Naive thymus-derived CD4-positive, alpha-beta T cell (primary cell): ENCODE measurements at regions of chr6 and their contacts with region 1.

Region 1: DNA sequence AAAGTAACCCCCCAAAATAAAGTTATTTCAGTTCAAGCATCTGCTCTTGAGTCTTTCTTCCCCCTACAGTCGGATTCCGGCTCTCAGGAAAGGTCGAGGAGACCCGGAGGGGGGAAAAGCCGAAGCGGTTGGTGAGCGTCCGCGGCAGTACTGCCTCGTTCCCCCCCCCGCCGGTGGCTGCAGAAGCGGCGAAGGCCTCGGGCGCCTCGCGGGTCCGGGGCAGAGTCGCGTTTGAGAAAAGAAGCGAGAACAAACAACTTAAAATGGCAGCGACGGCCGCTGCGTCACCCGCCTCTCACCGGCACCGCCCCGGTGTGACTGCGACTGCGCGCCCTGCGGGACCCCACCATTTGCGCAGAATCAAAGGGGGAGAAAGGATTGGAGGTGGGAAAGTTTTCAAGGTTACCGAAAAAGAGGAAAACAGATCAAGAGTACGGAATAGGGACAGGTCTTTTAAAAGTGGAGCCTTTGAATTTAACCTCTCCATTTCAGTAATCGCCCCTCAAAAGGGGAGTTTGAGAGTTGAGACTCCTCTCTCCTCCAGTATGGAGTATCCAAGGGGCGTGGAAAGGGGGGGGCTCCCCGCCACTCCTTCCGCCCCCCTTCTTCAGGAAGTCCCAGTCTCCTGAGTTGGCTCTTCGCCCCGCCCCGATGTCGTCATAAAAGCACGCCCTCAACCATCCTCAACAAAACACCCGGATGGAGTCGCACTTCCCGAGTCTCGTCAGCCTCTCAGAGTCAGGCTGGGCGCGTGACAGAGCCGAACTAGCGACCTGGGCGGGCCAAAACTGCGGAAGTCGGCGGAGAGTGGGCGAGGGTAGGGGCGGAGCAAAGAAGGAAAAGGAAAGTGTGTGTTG is 1.9 kb upstream of the C6orf62 start:
- DNase-seq: peak; percentile 97 to 100 (median 100)
- ATAC-seq: peak; percentile 90
- H3K4me3 ChIP-seq: peak overlapping the region; percentile 89
- H3K4me3 Mint-ChIP-seq: peak overlapping the region; percentile 93 to 97 (median 96)
- H3K27ac ChIP-seq: peak overlapping the region; percentile 99
- H3K27ac Mint-ChIP-seq: peak overlapping the region; percentile 95 to 100 (median 99)
- H3K4me1 ChIP-seq: peaks cover 35 to 36% of the 10 kb centered on the region in 2 donors
- H3K4me1 Mint-ChIP-seq: peaks cover 27 to 52% (median 47%) of the 10 kb centered on the region in 7 donors
- H3K27me3 ChIP-seq: no peaks in the 10 kb centered on the region
- H3K27me3 Mint-ChIP-seq: peaks cover 0 to 2% (median 0%) of the 10 kb centered on the region in 5 donors

Region 2: DNA sequence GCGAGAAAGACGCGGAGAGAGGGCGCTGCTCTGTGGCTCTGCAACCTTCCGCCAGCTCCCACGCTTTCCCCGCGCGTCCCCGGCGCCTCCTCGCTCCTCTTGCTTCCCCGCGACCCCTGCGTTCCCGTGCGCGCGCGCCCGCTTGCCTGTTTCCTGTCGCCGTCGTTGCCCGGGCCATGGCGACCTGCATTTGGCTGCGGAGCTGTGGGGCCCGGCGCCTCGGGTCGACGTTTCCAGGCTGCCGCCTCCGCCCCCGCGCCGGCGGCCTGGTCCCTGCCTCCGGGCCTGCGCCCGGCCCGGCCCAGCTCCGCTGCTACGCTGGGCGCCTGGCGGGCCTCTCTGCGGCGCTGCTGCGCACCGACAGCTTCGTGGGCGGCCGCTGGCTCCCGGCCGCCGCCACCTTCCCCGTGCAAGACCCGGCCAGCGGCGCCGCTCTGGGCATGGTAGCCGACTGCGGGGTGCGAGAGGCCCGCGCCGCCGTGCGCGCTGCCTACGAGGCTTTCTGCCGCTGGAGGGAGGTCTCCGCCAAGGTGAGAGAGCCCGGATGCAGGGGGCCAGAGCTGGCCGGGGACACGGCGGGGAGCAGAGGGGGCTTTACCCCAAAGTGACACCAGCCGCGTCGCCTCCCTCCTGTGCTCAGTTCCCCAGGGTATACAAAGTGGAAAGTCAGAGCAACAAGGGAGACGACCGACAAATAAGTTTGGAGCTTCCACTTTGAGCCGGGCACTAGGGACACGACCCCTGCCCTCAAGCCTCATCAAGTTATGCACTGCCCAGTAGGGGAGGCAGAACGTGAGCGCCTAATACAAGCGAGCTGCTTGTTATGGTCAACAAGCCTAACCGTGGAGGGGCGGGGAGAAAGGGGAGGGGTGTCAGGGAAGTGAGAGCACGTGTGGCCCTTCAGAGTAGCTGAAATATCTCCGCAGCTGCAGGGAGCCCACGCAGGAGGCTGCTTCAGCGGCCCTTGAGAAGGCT is 225.7 kb before region 1 on chr6 and contains the start of gene ALDH5A1:
- CTCF ChIA-PET with region 1: no interaction called
- POLR2A ChIA-PET with region 1: interaction called, 6 read pairs
- intact Hi-C with region 1: loop called in 1 of 2 experiments (anchors 1 kb)
- DNase-seq: peak; percentile 63 to 86 (median 84)
- ATAC-seq: peak; percentile 89
- H3K4me3 ChIP-seq: peak within 1 kb of the TSS; percentile 74
- H3K4me3 Mint-ChIP-seq: peak within 1 kb of the TSS; percentile 84 to 91 (median 88)
- H3K27ac ChIP-seq: peak within 1 kb of the TSS; percentile 63
- H3K27ac Mint-ChIP-seq: peak within 1 kb of the TSS; percentile 30 to 88 (median 74)
- H3K4me1 ChIP-seq: peaks cover 12 to 15% of the 10 kb centered on the region in 2 donors
- H3K4me1 Mint-ChIP-seq: peaks cover 13 to 50% (median 31%) of the 10 kb centered on the region in 7 donors
- H3K27me3 ChIP-seq: no peaks in the 10 kb centered on the region
- H3K27me3 Mint-ChIP-seq: peaks cover 0 to 2% (median 0%) of the 10 kb centered on the region in 5 donors
- total RNA-seq, gene ALDH5A1: 5.7 to 20.6 (median 8.9) TPM

Region 3: DNA sequence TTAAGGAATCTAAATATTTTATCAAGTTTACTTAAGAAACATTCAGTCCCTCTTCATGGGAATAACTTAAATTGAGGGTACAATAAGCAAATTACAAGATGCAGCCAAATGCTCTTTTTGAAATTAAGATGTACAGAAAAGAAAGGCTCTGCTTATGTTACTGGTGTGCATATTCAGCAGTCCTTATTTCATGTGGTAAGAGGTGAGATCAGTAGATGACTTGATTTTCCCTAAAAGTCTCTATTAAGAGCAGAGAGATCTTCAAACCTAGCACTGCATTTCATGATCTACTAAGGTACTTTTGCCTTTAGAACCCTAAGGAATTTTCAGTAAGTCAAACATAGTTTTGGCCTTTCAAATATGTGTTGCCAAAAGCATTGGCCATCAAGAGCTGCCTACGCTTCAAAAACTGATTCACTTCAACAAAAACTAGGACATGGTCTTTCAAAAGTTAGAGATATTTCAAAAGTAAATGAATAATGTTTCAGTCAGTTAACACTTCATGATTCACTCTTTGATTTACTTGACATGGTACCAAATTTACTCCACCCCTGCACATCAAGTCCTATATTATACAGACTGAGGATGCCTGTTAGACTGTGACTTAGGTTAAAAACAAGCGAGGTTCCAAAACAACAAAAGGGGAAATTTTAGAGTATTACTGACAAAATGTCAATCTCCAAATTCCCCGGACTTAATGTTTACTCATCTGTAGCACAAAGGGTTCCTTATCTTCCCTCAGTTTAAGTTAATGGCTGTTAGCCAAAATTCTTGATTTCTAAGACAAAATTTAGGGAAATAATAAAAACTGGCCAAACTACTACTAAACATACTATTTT is 21.1 kb before region 1 on chr6:
- CTCF ChIA-PET with region 1: no interaction called
- POLR2A ChIA-PET with region 1: interaction called, 17 read pairs
- intact Hi-C with region 1: no loop called
- DNase-seq: no peak
- ATAC-seq: no peak
- H3K4me3 ChIP-seq: no peak overlapping the region
- H3K4me3 Mint-ChIP-seq: no peak overlapping the region
- H3K27ac ChIP-seq: no peak overlapping the region
- H3K27ac Mint-ChIP-seq: peak overlapping the region in 8 of 9 donors; percentile 14 to 68 (median 30)
- H3K4me1 ChIP-seq: no peaks in the 10 kb centered on the region
- H3K4me1 Mint-ChIP-seq: peaks cover 8 to 28% (median 17%) of the 10 kb centered on the region in 7 donors
- H3K27me3 ChIP-seq: no peaks in the 10 kb centered on the region
- H3K27me3 Mint-ChIP-seq: no peaks in the 10 kb centered on the region

Region 4: GRCh38 chr6:24766680-24767462 is 46.0 kb after region 1 on chr6:
- CTCF ChIA-PET with region 1: no interaction called
- POLR2A ChIA-PET with region 1: interaction called, 5 read pairs
- intact Hi-C with region 1: loop called in 1 of 2 experiments (anchors 2 kb)
- DNase-seq: peak in 6 of 9 donors; percentile 9 to 48 (median 41)
- ATAC-seq: peak; percentile 74
- H3K4me3 ChIP-seq: no peak overlapping the region
- H3K4me3 Mint-ChIP-seq: no peak overlapping the region
- H3K27ac ChIP-seq: no peak overlapping the region
- H3K27ac Mint-ChIP-seq: no peak overlapping the region
- H3K4me1 ChIP-seq: no peaks in the 10 kb centered on the region
- H3K4me1 Mint-ChIP-seq: peaks cover 0 to 8% (median 3%) of the 10 kb centered on the region in 7 donors
- H3K27me3 ChIP-seq: no peaks in the 10 kb centered on the region
- H3K27me3 Mint-ChIP-seq: no peaks in the 10 kb centered on the region

Region 5: GRCh38 chr6:24910961-24911712 is 190.3 kb after region 1 on chr6:
- CTCF ChIA-PET with region 1: no interaction called
- POLR2A ChIA-PET with region 1: no interaction called
- intact Hi-C with region 1: loop called in 1 of 2 experiments (anchors 5 kb)
- DNase-seq: peak in 6 of 9 donors; percentile 37 to 67 (median 56)
- ATAC-seq: peak; percentile 60
- H3K4me3 ChIP-seq: peak overlapping the region; percentile 41
- H3K4me3 Mint-ChIP-seq: peak overlapping the region; percentile 92 to 97 (median 96)
- H3K27ac ChIP-seq: peak overlapping the region; percentile 75
- H3K27ac Mint-ChIP-seq: peak overlapping the region; percentile 88 to 99 (median 97)
- H3K4me1 ChIP-seq: peaks cover 88 to 93% of the 10 kb centered on the region in 2 donors
- H3K4me1 Mint-ChIP-seq: peaks cover 88 to 98% (median 97%) of the 10 kb centered on the region in 7 donors
- H3K27me3 ChIP-seq: no peaks in the 10 kb centered on the region
- H3K27me3 Mint-ChIP-seq: no peaks in the 10 kb centered on the region

Region 6: DNA sequence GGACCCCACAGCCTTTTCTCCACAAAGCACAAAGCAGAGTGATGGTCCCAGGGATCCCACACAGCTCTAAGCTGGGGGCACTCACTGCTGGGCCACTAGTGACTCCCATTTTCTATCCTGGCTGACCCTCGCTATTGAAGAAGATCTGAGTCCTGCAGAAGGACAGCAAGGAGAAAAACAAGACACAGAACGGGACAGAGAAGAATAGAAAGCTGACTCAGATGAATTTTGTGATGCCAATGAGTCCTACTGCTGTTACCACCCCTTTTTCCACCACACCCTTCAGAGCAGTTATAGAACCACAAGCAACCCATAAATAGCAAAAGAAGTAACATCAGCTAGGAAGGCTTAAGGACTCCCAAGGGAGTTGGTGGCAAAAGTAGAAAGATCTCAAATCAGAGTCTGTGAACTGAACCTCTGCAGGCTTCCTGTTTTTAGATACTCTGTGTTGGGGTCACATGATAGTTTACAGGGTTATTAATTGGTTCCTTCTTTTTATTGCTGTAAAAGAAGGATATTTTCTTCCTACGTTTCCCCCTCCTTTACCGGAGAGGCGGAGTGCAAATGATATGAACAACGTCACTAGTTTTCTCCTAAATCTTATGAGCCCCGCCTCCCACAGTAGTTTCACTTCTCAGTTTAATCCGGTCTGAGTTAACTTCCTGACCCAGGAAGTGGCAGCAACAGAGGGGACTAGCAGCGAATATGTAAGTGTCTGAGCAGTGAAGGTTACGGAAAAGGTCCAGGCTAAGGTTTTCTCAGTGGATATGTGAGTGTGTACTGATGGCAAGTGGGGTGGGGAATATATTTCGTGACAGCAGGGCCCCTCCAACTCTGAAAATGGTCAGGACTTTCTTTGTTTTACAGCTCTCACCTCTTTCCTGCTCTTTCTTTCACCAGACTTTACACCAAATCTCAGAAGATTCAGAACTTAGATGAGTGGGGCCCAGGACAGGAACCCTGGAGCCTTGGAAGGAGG is 1241.6 kb after region 1 on chr6 and contains the start of gene TRIM38:
- CTCF ChIA-PET with region 1: no interaction called
- POLR2A ChIA-PET with region 1: no interaction called
- intact Hi-C with region 1: loop called in 1 of 2 experiments (anchors 5 kb)
- DNase-seq: peak; percentile 22 to 90 (median 85)
- ATAC-seq: peak; percentile 95
- H3K4me3 ChIP-seq: peak within 1 kb of the TSS; percentile 73
- H3K4me3 Mint-ChIP-seq: peak within 1 kb of the TSS; percentile 92 to 100 (median 97)
- H3K27ac ChIP-seq: peak within 1 kb of the TSS; percentile 97
- H3K27ac Mint-ChIP-seq: peak within 1 kb of the TSS; percentile 97 to 100 (median 98)
- H3K4me1 ChIP-seq: peaks cover 61 to 75% of the 10 kb centered on the region in 2 donors
- H3K4me1 Mint-ChIP-seq: peaks cover 61 to 89% (median 84%) of the 10 kb centered on the region in 7 donors
- H3K27me3 ChIP-seq: no peaks in the 10 kb centered on the region
- H3K27me3 Mint-ChIP-seq: no peaks in the 10 kb centered on the region
- total RNA-seq, gene TRIM38: 17.4 to 32.8 (median 29.9) TPM